Activated CD4-positive, alpha-beta memory T cell treated with anti-CD3 and anti-CD28 coated beads for 36 hours (primary cell): ENCODE measurements at regions of chr9 and their contacts with region 1.

Region 1: DNA sequence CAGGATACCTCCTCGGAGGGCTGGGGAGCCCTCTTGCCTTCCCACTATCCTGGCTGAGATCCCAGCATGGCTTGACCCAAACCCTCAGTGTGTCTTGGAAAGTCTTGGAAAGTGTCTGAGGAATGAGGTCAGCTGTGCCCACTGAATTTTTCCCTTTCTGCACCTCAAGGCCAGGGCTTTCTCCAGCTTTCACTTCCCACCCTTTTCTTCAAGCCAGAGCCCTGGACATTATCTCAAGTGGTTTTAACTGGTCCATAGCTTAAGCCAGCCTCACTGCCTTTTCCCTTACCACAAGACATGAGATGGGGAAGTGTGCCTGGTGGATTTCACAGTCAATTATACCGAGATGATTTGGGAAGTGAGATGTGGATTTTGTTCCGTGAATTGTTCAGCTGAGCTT is 35.7 kb upstream of the LHX2 start:
- DNase-seq: no peak
- H3K4me3 Mint-ChIP-seq: no peak overlapping the region
- H3K27ac Mint-ChIP-seq: no peak overlapping the region
- H3K4me1 Mint-ChIP-seq: no peaks in the 10 kb centered on the region
- H3K27me3 Mint-ChIP-seq: peaks cover 19% of the 10 kb centered on the region

Region 2: GRCh38 chr9:123990427-123990826 is 14.6 kb after region 1 on chr9:
- CTCF ChIA-PET with region 1: no interaction called
- POLR2A ChIA-PET with region 1: no interaction called
- intact Hi-C with region 1: loop called (anchors 2 kb)
- DNase-seq: no peak
- H3K4me3 Mint-ChIP-seq: no peak overlapping the region
- H3K27ac Mint-ChIP-seq: no peak overlapping the region
- H3K4me1 Mint-ChIP-seq: no peaks in the 10 kb centered on the region
- H3K27me3 Mint-ChIP-seq: peaks cover 39% of the 10 kb centered on the region

Region 3: DNA sequence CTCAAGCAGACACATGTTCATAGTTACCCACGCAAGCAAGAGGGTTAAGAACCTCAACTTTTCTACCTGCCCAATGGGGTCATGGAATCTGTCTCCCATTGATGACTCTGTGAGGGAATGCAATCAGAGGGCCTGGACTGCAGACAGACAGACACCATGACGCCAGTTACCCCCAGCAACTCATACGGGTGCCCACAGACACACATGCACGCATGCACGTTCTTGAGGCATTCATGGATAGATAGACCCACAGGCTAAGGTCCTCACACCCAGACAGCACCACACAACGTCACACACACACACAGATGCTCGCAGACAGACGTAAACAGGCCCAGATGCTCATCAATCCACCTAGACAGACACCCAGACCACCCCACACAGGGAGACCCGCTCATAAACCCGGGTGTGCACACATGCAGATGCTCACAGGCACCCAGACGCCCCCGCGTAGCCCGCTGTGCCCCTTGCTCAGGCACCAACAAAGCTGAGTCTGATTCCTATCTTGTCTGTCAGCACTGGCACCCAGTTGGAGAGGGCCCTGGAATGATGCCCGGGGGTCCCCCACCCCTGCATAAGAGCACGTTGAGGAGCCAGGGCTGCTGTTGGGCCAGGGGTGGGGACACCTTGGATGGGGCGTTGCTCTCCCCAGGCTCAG is 59.3 kb after region 1 on chr9:
- CTCF ChIA-PET with region 1: no interaction called
- POLR2A ChIA-PET with region 1: no interaction called
- intact Hi-C with region 1: no loop called
- DNase-seq: no peak
- H3K4me3 Mint-ChIP-seq: no peak overlapping the region
- H3K27ac Mint-ChIP-seq: no peak overlapping the region
- H3K4me1 Mint-ChIP-seq: peaks cover 2% of the 10 kb centered on the region
- H3K27me3 Mint-ChIP-seq: peaks cover 56% of the 10 kb centered on the region